GM23248 (cell line): ENCODE measurements at regions of chr1 and their contacts with region 1.

Region 1: GRCh38 chr1:116485071-116485735 is 85.6 kb downstream of the CD58 start:
- DNase-seq: peak; percentile 89
- H3K4me3 ChIP-seq: no peak overlapping the region
- H3K27ac ChIP-seq: no peak overlapping the region
- H3K4me1 ChIP-seq: peaks cover 36% of the 10 kb centered on the region
- H3K27me3 ChIP-seq: no peaks in the 10 kb centered on the region

Region 2: GRCh38 chr1:115717541-115717940 is 767.7 kb before region 1 on chr1:
- in situ Hi-C with region 1: no loop called
- DNase-seq: peak; percentile 36
- H3K4me3 ChIP-seq: no peak overlapping the region
- H3K27ac ChIP-seq: no peak overlapping the region
- H3K4me1 ChIP-seq: no peaks in the 10 kb centered on the region
- H3K27me3 ChIP-seq: peaks cover 7% of the 10 kb centered on the region

Region 3: DNA sequence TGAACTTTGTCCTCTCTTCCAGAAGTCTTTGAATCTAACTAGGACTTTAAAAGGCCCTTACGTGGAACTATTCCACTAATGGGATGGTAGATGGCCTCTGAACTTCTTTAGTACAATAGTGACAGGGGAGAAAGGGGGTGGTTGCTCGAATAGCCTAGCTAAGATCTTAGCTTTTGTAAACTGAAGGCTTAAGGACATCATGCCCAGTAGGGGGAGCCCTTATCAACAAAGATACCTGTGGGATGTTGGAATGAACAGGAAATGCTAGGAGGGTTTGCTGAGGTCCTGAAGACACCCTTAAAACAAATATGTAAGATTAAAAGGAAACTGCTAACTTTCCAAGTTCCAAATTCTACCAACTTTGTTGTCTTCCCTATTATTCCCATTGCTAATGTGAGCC is 677.5 kb before region 1 on chr1:
- in situ Hi-C with region 1: loop called (anchors 25 kb)
- DNase-seq: peak; percentile 83
- H3K4me3 ChIP-seq: no peak overlapping the region
- H3K27ac ChIP-seq: no peak overlapping the region
- H3K4me1 ChIP-seq: no peaks in the 10 kb centered on the region
- H3K27me3 ChIP-seq: no peaks in the 10 kb centered on the region

Region 4: GRCh38 chr1:116133696-116134650 is 351.2 kb before region 1 on chr1:
- in situ Hi-C with region 1: loop called (anchors 10 kb)
- DNase-seq: peak; percentile 19
- H3K4me3 ChIP-seq: no peak overlapping the region
- H3K27ac ChIP-seq: no peak overlapping the region
- H3K4me1 ChIP-seq: no peaks in the 10 kb centered on the region
- H3K27me3 ChIP-seq: 0 out of 2 replicates have a peak, but pooled peaks cover 2% of the 10 kb centered on the region

Region 5: GRCh38 chr1:116833718-116834117 is 348.5 kb after region 1 on chr1:
- in situ Hi-C with region 1: no loop called
- DNase-seq: no peak
- H3K4me3 ChIP-seq: no peak overlapping the region
- H3K27ac ChIP-seq: no peak overlapping the region
- H3K4me1 ChIP-seq: no peaks in the 10 kb centered on the region
- H3K27me3 ChIP-seq: peaks cover 31% of the 10 kb centered on the region

Region 6: GRCh38 chr1:117026361-117026760 is 541.2 kb after region 1 on chr1:
- in situ Hi-C with region 1: no loop called
- DNase-seq: peak; percentile 20
- H3K4me3 ChIP-seq: no peak overlapping the region
- H3K27ac ChIP-seq: no peak overlapping the region
- H3K4me1 ChIP-seq: no peaks in the 10 kb centered on the region; the same call in 1 of the 2 replicates
- H3K27me3 ChIP-seq: no peaks in the 10 kb centered on the region